ENCODE measurements at regions of chr7 and their contacts with region 1.

Region 1: DNA sequence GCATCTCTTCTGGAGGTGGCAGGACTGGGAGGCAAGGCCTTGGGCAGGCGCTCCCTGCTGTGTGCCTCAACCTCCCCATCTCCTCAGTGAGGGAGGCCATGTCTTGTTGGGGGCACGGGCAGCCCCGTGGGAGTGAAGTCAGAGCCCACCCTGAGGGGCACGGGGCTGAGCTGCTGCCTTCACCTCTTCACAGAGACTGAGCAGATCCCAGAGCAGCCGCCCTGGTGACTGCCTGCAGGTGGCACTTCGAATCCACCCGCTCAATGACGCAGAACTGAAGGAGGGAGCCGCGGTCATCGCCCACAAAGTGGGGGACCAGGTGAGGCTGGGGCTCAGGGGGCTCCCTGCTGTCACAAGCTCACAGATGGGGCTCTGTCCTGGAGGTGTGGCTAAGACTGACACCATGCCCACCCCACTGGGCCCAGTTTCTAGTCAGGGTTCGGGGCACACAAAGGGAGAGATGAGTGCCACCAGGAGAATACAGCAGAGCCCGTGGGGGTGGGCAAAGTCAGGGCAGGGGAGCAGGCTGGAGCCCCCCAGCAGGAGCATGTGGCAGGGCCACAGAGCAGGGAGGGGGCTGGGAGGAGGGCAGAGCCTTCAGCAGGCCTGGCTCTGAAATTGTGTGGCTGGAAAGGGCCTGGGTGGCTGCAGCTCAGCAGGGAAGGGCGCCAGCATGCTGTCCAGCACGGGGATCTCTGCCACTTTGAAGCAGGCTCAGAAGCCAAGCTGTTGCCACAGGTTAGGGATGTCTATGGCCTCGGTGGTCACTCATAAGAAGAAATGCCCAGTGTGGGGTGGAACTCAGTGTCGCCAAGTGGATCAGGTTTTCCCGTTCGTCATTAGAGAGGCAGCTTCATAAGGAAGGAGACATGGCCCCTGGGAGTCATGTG is 18.8 kb upstream of the CHST12 start:
- DNase-seq: peak; percentile 66
- H3K4me3 ChIP-seq: no peak overlapping the region
- H3K27ac ChIP-seq: peak overlapping the region in 1 of 2 experiments; percentile 71; a peak in 2 of 4 replicates
- H3K4me1 ChIP-seq: peaks cover 0 to 20% of the 10 kb centered on the region in 2 experiments; a peak in 1 of 4 replicates
- H3K27me3 ChIP-seq: no peaks in the 10 kb centered on the region
- CTCF ChIP-seq: no peak
- EP300 ChIP-seq: no peak
- RAD21 ChIP-seq: peak; percentile 62

Region 2: GRCh38 chr7:2403014-2403717 is 18.6 kb after region 1 on chr7 and contains the start of gene CHST12:
- CTCF ChIA-PET with region 1: interaction called, 10 read pairs
- POLR2A ChIA-PET with region 1: interaction called, 5 read pairs
- DNase-seq: peak; percentile 100
- H3K4me3 ChIP-seq: peak within 1 kb of the TSS; percentile 66 to 76
- H3K27ac ChIP-seq: peak within 1 kb of the TSS; percentile 26 to 65; a peak in 2 of 4 replicates
- H3K4me1 ChIP-seq: peaks cover 10 to 30% of the 10 kb centered on the region in 2 experiments; a peak in 2 of 4 replicates
- H3K27me3 ChIP-seq: no peaks in the 10 kb centered on the region
- CTCF ChIP-seq: no peak
- EP300 ChIP-seq: no peak; a peak in 1 of 4 replicates
- RAD21 ChIP-seq: no peak
- polyA plus RNA-seq, gene CHST12: 26.7 and 32.7 TPM in 2 replicates

Measured in SK-N-SH (cell line).